ENCODE measurements at regions of chr20 and their contacts with region 1.

Region 1: GRCh38 chr20:17995967-17996819 is 27.4 kb downstream of the MGME1 start:
- DNase-seq: peak; percentile 78
- H3K4me3 ChIP-seq: no peak overlapping the region
- H3K27ac ChIP-seq: no peak overlapping the region
- H3K4me1 ChIP-seq: peaks cover 7% of the 10 kb centered on the region
- H3K27me3 ChIP-seq: no peaks in the 10 kb centered on the region
- CTCF ChIP-seq: peak; percentile 91

Region 2: GRCh38 chr20:17662333-17663039 is 333.7 kb before region 1 on chr20:
- CTCF ChIA-PET with region 1: no interaction called
- POLR2A ChIA-PET with region 1: no interaction called
- intact Hi-C with region 1: loop called (anchors 10 kb)
- DNase-seq: peak; percentile 71
- H3K4me3 ChIP-seq: no peak overlapping the region
- H3K27ac ChIP-seq: peak overlapping the region; percentile 58
- H3K4me1 ChIP-seq: peaks cover 54% of the 10 kb centered on the region
- H3K27me3 ChIP-seq: no peaks in the 10 kb centered on the region
- CTCF ChIP-seq: no peak

Region 3: DNA sequence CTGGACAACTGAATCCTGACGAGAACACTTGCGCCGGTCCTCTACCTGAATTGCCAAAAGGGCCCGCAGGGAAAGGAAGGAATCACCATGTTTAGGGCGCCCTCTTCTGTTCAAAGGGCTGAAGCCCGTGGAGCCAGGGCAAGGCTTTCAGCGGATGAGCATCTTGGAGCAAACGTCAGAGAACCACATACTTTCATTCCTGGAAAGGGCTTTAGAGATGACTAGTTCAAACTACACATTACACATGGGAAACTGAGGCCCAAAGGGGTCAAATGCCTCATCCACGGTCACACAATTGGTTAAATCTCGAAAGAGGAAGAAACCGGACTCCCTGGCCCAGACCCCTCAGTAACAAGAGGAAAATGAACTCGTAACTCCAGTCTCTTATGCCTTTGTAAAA is 280.6 kb after region 1 on chr20:
- CTCF ChIA-PET with region 1: no interaction called
- POLR2A ChIA-PET with region 1: no interaction called
- intact Hi-C with region 1: loop called (anchors 5 kb)
- DNase-seq: peak; percentile 75
- H3K4me3 ChIP-seq: no peak overlapping the region
- H3K27ac ChIP-seq: no peak overlapping the region
- H3K4me1 ChIP-seq: no peaks in the 10 kb centered on the region
- H3K27me3 ChIP-seq: peaks cover 45% of the 10 kb centered on the region
- CTCF ChIP-seq: peak; percentile 92

Measured in A673 (cell line).